Activated B cell treated with CpG ODN at 0.5 μM for 24 hours (primary cell): ENCODE measurements at regions of chr7 and their contacts with region 1.

Region 1: DNA sequence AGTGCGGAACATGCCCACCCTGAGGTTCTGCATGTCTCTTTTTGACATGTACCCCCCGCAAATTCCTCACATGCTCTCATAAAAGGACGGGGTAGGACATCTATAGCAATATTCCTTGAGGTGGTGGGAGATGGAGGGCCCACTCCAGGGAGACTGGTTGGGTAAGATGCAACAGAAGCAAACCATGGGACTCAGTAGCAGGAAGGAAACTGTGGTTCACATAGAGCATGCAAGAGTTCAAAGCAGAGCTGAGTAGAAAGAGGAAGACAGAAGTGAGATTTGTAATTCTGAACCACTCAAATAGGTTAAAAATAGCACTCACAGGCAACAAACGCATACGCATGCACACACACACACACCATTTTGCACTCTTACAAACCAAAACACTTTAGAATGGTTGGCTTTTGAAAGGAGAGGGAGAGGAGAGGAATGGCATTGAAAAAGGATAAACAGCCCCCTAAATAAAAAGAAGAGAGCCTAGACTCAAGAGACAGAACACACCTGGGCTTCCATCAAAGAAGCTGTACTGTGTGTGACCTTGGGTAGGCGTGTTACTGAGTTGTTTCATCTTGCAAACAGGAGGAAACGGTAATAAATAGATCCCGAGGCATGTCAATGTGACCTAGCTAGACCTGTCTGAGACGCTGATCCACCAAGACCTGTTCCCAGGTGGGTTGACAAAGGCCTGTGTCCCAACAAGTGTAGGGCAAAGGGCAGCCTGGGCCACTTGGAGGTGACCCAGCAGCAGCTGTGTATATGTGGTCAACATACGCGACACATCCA is 77.6 kb upstream of the LRRC4 start:
- DNase-seq: no peak
- ATAC-seq: peak; percentile 81
- H3K4me3 Mint-ChIP-seq: peak overlapping the region; percentile 76
- H3K27ac Mint-ChIP-seq: peak overlapping the region; percentile 90
- H3K4me1 Mint-ChIP-seq: peaks cover 80% of the 10 kb centered on the region
- H3K27me3 Mint-ChIP-seq: no peaks in the 10 kb centered on the region
- CTCF ChIP-seq: no peak

Region 2: DNA sequence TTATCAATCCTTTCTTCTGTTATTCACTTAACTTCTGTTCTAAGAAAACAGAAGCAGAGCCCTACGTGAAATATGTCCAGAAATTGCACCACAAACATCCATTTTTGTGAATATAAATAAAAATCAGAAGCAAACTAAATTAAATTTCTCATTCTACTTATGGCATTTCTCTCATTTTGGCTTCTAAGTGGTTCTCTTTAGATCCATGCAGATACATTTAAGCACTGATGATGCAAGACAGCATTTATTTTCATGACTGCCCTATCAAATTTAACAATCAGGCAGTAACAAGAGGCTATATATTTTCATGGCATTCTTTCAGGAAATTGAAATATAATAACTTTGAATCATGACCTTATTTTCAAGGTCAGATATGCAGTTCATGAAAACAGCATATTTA is 1905.6 kb before region 1 on chr7:
- CTCF ChIA-PET with region 1: no interaction called
- POLR2A ChIA-PET with region 1: no interaction called
- intact Hi-C with region 1: no loop called
- DNase-seq: no peak
- ATAC-seq: no peak
- H3K4me3 Mint-ChIP-seq: no peak overlapping the region
- H3K27ac Mint-ChIP-seq: no peak overlapping the region
- H3K4me1 Mint-ChIP-seq: no peaks in the 10 kb centered on the region
- H3K27me3 Mint-ChIP-seq: no peaks in the 10 kb centered on the region
- CTCF ChIP-seq: no peak

Region 3: DNA sequence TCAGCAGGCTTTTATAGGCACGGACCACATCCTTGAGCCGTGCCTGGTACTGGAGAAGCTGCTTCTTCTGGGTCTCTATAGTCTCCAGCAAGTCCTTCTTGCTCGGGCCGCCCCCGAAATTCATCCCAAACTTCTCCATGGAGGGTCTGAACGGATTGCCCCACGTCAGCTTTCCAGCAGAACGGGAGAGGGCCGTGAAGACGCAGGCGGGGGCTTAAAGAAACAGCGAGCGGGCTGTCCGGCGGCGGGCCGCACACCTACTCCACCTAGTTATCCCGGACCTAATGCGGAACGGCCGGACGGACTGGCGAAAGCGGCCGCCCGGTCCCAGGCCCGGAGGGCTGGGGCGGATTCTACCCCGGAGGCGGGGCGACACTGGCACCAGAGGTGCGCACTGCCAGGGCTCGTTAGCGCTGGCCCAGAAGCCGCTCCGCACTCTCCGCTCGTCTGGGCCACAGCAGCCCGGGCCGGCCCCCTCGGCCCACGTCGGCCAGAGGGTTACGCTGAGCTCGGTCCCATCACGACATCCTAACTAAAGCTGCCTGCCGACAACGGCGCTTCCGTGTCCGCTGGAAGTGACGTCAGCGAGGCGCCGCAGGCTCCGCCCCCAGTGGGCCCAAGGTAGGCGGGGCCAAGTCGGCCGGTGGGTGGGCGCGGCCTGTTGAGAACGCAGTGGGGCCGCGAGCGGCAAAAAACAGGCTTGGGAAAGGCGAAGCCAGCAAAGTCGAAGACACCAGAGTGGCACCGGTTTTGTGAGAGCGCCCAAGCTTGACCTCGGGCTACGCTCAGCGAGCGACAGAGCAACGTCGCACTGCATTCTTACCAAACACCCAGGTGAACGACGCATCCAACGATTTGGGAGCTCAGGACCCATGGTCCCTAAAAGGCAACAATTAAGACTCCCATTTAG is 523.5 kb before region 1 on chr7 and contains the start of gene GCC1:
- CTCF ChIA-PET with region 1: no interaction called
- POLR2A ChIA-PET with region 1: no interaction called
- intact Hi-C with region 1: loop called (anchors 5 kb)
- DNase-seq: peak; percentile 98
- ATAC-seq: peak; percentile 78
- H3K4me3 Mint-ChIP-seq: peak within 1 kb of the TSS; percentile 89
- H3K27ac Mint-ChIP-seq: peak within 1 kb of the TSS; percentile 79
- H3K4me1 Mint-ChIP-seq: peaks cover 76% of the 10 kb centered on the region
- H3K27me3 Mint-ChIP-seq: no peaks in the 10 kb centered on the region
- CTCF ChIP-seq: no peak
- total RNA-seq, gene GCC1: 22.5 and 23.3 TPM in 2 replicates

Region 4: GRCh38 chr7:128031901-128032604 is 76.8 kb before region 1 on chr7:
- CTCF ChIA-PET with region 1: no interaction called
- POLR2A ChIA-PET with region 1: no interaction called
- intact Hi-C with region 1: loop called (anchors 5 kb)
- DNase-seq: peak; percentile 45
- ATAC-seq: peak; percentile 83
- H3K4me3 Mint-ChIP-seq: peak overlapping the region; percentile 88
- H3K27ac Mint-ChIP-seq: no peak overlapping the region
- H3K4me1 Mint-ChIP-seq: peaks cover 26% of the 10 kb centered on the region
- H3K27me3 Mint-ChIP-seq: peaks cover 4% of the 10 kb centered on the region
- CTCF ChIP-seq: no peak

Region 5: DNA sequence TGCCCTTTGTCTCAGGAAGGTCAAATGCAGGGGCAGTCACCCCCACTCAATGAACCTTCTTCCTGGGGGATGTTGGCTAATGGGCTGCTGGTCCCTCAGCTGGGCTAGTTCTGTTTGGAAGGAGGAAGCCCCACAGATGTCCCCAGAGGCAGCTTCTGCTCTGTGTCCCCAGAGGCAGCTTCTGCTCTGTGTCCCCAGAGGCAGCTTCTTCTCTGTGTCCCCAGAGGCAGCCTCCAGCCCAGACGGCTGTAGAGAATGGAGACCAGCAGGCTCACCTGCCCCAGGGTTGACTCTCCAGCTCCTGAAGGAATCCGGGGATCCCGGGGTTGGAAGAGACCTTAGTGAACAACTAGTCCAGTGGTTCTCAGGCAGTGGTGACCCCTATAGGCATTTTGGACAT is 69.8 kb after region 1 on chr7:
- CTCF ChIA-PET with region 1: no interaction called
- POLR2A ChIA-PET with region 1: no interaction called
- intact Hi-C with region 1: loop called (anchors 1 kb)
- DNase-seq: peak; percentile 49
- ATAC-seq: peak; percentile 100
- H3K4me3 Mint-ChIP-seq: no peak overlapping the region
- H3K27ac Mint-ChIP-seq: no peak overlapping the region
- H3K4me1 Mint-ChIP-seq: peaks cover 49% of the 10 kb centered on the region
- H3K27me3 Mint-ChIP-seq: peaks cover 31% of the 10 kb centered on the region
- CTCF ChIP-seq: no peak

Region 6: GRCh38 chr7:128236924-128237586 is 128.2 kb after region 1 on chr7:
- CTCF ChIA-PET with region 1: no interaction called
- POLR2A ChIA-PET with region 1: no interaction called
- intact Hi-C with region 1: no loop called
- DNase-seq: no peak
- ATAC-seq: no peak
- H3K4me3 Mint-ChIP-seq: no peak overlapping the region
- H3K27ac Mint-ChIP-seq: no peak overlapping the region
- H3K4me1 Mint-ChIP-seq: no peaks in the 10 kb centered on the region
- H3K27me3 Mint-ChIP-seq: peaks cover 16% of the 10 kb centered on the region
- CTCF ChIP-seq: no peak